GM23248 (cell line): ENCODE measurements at regions of chr21 and their contacts with region 1.

Region 1: DNA sequence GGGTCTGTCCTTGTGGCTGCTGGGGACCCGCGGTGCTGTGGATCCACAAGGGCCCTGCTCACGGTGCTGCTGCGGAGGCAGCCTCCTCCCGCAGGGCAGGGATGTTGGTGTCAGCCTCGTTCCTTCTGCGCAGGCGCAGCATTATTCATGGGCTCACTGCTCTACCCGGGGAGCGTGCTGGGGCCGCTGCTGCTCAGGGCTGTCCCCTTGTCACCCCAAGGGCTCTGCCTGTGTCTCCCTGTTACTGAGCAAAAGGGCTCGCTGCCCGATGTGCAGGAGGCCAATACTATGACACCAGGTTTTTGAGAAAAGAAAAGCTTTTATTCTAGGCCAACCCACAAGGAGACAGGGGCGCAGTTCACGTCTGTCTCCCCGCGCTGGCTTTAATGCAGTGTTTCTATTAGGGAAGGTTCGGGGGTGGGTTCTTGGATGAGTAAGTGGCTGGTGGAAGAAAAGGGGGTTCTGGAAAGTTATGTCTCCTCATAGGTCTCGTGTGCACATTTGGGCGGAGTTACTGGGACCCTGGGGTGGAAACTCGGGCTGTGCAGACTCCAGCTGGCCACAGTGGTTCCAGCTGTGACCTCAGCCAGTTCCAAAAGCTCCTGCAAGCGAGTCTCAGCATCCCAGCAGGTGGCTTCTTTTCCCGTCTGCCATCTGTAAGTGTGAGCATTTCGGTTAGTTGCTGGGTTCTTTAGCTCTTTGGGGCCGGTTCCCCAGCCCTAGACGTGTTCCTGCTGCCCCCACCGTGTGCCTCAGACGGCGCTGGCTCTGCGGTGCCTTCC is 40.8 kb upstream of the LRRC3 start:
- DNase-seq: no peak
- H3K4me3 ChIP-seq: no peak overlapping the region
- H3K27ac ChIP-seq: no peak overlapping the region
- H3K4me1 ChIP-seq: no peaks in the 10 kb centered on the region
- H3K27me3 ChIP-seq: no peaks in the 10 kb centered on the region; the same call in 1 of the 2 replicates

Region 2: DNA sequence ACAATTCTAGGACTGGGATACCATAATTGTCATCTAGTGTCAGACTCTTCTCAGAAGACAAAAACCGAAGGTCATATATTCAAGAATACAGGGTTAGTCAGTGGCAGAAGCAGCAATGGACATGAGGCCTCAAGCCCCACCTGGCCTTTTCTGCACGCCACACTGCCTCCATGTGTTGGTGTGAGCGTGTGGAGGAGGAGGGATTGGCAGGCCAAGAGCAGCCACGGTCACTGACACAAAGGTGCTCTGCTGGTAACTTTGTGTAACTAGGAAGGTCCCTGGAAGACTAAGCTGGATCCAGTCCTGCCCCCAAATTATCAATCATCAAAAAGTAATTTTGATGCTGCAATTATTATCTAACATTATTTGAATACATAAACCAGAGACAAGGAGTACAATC is 790.1 kb before region 1 on chr21:
- in situ Hi-C with region 1: no loop called
- DNase-seq: no peak
- H3K4me3 ChIP-seq: no peak overlapping the region
- H3K27ac ChIP-seq: no peak overlapping the region
- H3K4me1 ChIP-seq: no peaks in the 10 kb centered on the region
- H3K27me3 ChIP-seq: no peaks in the 10 kb centered on the region

Region 3: DNA sequence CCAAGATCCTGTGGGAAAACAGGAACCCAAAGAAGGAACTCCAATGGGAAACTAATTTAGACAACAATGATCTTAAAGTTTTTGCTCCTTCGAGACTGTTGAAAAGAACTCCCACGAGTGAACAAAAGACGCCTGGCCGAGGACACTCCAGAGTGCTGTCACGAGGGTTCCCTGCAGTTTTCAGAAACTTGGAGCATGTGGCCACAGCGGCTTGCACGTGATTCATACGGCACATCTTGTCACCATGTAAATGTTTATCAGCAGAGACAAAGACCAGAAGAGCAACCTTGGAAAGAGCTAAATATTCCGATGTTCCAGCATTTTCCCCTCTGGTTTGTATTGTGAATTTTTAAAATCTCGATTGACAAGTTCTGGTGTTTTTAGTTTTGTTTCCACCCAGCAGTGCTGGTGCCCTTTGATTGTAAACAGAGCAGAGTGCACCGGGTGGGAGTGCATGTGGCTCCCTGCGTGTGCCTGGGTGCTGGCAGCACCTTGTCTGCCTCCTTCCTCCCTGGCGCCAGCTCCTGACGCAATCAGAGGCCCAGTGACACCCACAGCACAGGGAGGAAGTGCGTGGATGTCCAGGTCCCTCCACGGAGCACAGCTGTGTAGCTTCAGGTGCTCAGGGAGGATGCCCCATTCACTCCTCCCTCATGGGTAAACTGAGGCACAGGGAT is 63.8 kb after region 1 on chr21:
- in situ Hi-C with region 1: loop called (anchors 10 kb)
- DNase-seq: no peak
- H3K4me3 ChIP-seq: no peak overlapping the region
- H3K27ac ChIP-seq: no peak overlapping the region
- H3K4me1 ChIP-seq: no peaks in the 10 kb centered on the region
- H3K27me3 ChIP-seq: peaks cover under 1% of the 10 kb centered on the region; the same call in 1 of the 2 replicates